ENCODE measurements at regions of chr7 and their contacts with region 1.

Region 1: GRCh38 chr7:78510580-78511188 is 712.1 kb downstream of the PHTF2 start:
- DNase-seq: peak; percentile 47
- ATAC-seq: peak; percentile 74
- H3K4me3 ChIP-seq: no peak overlapping the region
- H3K27ac ChIP-seq: no peak overlapping the region
- H3K4me1 ChIP-seq: no peaks in the 10 kb centered on the region
- H3K27me3 ChIP-seq: 0 out of 2 replicates have a peak, but pooled peaks cover 5% of the 10 kb centered on the region
- CTCF ChIP-seq: peak; percentile 73

Region 2: DNA sequence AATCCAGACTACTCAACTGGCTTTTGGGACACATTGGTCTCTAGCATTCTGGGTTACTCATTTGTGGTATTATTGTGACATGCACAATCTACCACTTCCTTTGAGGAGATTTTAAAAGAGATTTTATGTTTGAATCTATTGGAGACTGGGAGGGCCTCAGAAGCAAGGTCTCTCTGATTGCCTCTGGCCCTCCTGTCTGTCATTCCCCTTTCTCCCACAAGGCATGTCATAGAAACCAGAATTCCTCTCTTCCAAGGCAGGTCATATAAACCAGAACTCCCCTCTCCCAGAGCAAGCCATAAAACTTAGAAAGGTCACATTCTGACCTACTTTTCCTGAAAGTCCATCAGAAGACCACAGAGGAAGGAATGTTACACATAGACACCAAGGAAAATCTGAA is 65.6 kb after region 1 on chr7:
- CTCF ChIA-PET with region 1: no interaction called
- POLR2A ChIA-PET with region 1: no interaction called
- intact Hi-C with region 1: loop called (anchors 5 kb)
- DNase-seq: peak; percentile 21
- ATAC-seq: no peak
- H3K4me3 ChIP-seq: no peak overlapping the region
- H3K27ac ChIP-seq: no peak overlapping the region
- H3K4me1 ChIP-seq: no peaks in the 10 kb centered on the region
- H3K27me3 ChIP-seq: peaks cover 12% of the 10 kb centered on the region
- CTCF ChIP-seq: no peak

Region 3: GRCh38 chr7:78709658-78710057 is 199.0 kb after region 1 on chr7:
- CTCF ChIA-PET with region 1: no interaction called
- POLR2A ChIA-PET with region 1: no interaction called
- intact Hi-C with region 1: loop called (anchors 5 kb)
- DNase-seq: no peak
- ATAC-seq: no peak
- H3K4me3 ChIP-seq: no peak overlapping the region
- H3K27ac ChIP-seq: no peak overlapping the region
- H3K4me1 ChIP-seq: no peaks in the 10 kb centered on the region
- H3K27me3 ChIP-seq: no peaks in the 10 kb centered on the region
- CTCF ChIP-seq: no peak